Activated naive CD4-positive, alpha-beta T cell treated with anti-CD3 and anti-CD28 coated beads for 36 hours (primary cell): ENCODE measurements at regions of chr3 and their contacts with region 1.

Region 1: DNA sequence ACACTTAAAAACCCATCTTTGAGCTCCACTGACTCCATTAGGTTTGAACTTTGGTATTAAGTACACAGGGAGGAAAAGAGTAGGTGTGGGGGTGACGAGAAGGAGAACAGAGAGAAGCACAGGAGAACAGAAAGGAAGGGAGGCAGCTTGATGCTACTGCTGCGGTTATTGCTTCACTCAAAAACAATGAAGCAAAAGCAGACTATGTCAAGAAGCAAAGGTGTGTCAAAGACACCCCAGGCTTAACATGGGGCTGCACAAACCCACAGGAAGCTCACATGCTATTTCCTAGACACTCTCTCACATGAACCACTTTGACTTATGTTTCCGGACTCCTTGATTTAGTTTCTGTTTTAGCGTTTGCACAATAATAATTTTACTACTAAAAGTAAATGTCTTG is 961.0 kb upstream of the CFAP20DC start:
- DNase-seq: peak; percentile 80
- H3K4me3 Mint-ChIP-seq: peak overlapping the region; percentile 75
- H3K27ac Mint-ChIP-seq: peak overlapping the region; percentile 97
- H3K4me1 Mint-ChIP-seq: peaks cover 87% of the 10 kb centered on the region
- H3K27me3 Mint-ChIP-seq: no peaks in the 10 kb centered on the region

Region 2: DNA sequence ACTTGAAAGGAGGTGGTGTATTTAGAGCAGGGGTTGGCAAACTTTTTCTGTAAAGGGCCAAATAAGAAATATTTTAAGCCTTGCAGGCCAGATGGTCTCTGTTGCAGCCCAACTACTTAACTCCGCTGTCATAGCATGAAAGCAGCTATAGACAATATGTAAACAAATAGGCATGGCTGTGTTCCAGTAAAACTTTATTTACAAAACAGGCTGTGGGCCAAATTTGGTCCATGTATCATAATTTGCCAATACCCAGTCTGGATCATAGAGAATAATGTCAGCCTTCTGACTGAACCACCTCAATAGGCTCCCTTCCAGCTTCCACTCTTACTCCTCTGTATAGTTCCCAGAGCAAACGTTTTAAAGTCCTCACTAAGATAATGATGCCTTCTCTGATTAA is 322.1 kb before region 1 on chr3:
- CTCF ChIA-PET with region 1: no interaction called
- intact Hi-C with region 1: no loop called
- DNase-seq: no peak
- H3K4me3 Mint-ChIP-seq: no peak overlapping the region
- H3K27ac Mint-ChIP-seq: no peak overlapping the region
- H3K4me1 Mint-ChIP-seq: no peaks in the 10 kb centered on the region
- H3K27me3 Mint-ChIP-seq: no peaks in the 10 kb centered on the region

Region 3: DNA sequence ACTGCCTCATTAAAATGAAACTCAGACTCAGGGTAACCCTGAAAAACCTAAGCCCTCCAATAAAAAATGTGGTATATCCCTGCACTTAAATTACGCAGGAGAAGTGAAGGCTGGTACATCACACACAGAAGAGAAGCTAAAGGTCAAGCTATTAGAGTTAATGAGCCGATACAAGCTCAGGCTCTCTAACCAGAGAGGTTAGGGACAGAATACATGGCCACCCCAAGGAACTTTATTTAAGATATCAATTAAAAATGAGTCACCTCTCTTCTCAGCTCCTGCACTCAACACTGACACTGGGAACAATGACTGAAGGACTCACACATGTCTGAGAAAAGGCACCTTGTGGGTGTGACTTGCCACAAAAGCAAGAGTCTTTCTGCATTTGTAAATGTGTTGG is 160.4 kb before region 1 on chr3:
- CTCF ChIA-PET with region 1: no interaction called
- intact Hi-C with region 1: no loop called
- DNase-seq: no peak
- H3K4me3 Mint-ChIP-seq: no peak overlapping the region
- H3K27ac Mint-ChIP-seq: no peak overlapping the region
- H3K4me1 Mint-ChIP-seq: peaks cover 31% of the 10 kb centered on the region
- H3K27me3 Mint-ChIP-seq: no peaks in the 10 kb centered on the region

Region 4: GRCh38 chr3:59963676-59964075 is 47.1 kb before region 1 on chr3:
- CTCF ChIA-PET with region 1: interaction called, 3 read pairs
- intact Hi-C with region 1: loop called (anchors 2 kb)
- DNase-seq: no peak
- H3K4me3 Mint-ChIP-seq: no peak overlapping the region
- H3K27ac Mint-ChIP-seq: no peak overlapping the region
- H3K4me1 Mint-ChIP-seq: peaks cover 44% of the 10 kb centered on the region
- H3K27me3 Mint-ChIP-seq: no peaks in the 10 kb centered on the region

Region 5: DNA sequence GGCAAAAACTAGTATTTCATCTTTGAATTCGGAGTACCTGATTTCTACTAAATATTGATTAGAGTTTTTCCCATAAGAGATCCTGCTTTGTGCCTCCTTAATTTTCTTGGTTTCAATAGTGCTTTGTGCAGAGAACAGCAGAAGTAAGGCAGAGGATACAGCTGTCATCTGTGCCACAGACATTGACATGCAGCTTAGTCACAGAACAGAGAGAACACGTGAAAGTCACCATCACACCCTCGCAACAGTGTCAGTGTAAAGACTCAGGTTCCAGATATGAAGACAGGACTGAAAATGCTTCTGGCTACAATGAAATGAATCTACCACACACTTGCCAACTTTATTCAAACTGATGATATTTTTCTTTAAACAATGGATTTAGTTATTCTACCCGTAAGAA is 18.2 kb before region 1 on chr3:
- CTCF ChIA-PET with region 1: interaction called, 6 read pairs
- intact Hi-C with region 1: loop called (anchors 1 kb)
- DNase-seq: peak; percentile 76
- H3K4me3 Mint-ChIP-seq: peak overlapping the region; percentile 43
- H3K27ac Mint-ChIP-seq: peak overlapping the region; percentile 84
- H3K4me1 Mint-ChIP-seq: peaks cover 96% of the 10 kb centered on the region
- H3K27me3 Mint-ChIP-seq: no peaks in the 10 kb centered on the region

Region 6: DNA sequence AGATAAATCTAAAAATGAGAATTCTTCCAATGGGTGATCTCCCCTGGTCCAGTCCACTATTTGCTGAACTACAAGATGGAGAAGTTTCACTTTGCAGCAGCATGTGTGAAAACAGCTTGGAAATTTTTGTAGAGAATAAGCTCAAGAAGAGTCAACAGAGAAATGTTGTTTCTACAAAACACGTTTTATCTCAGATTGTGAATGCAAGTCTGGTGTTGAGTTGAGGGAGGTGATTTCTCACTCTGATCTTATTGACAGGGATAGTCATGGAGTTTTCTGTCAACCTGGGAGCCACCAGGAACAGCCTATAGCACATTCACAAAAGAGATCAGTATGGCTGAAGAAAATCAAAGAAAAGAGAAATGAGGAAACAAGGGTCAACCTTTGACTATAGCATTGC is 20.2 kb after region 1 on chr3:
- CTCF ChIA-PET with region 1: interaction called, 4 read pairs
- intact Hi-C with region 1: loop called (anchors 1 kb)
- DNase-seq: no peak
- H3K4me3 Mint-ChIP-seq: peak overlapping the region; percentile 6
- H3K27ac Mint-ChIP-seq: peak overlapping the region; percentile 90
- H3K4me1 Mint-ChIP-seq: peaks cover 77% of the 10 kb centered on the region
- H3K27me3 Mint-ChIP-seq: no peaks in the 10 kb centered on the region